ENCODE measurements at regions of chr12 and their contacts with region 1.

Region 1: GRCh38 chr12:20220339-20220738 is 148.0 kb upstream of the PDE3A start:
- DNase-seq: no peak

Region 2: GRCh38 chr12:19744734-19745218 is 475.6 kb before region 1 on chr12:
- intact Hi-C with region 1: loop called (anchors 10 kb)
- DNase-seq: no peak

Region 3: GRCh38 chr12:19938031-19938430 is 282.3 kb before region 1 on chr12:
- intact Hi-C with region 1: no loop called
- DNase-seq: no peak